ENCODE measurements at regions of chr17 and their contacts with region 1.

Region 1: DNA sequence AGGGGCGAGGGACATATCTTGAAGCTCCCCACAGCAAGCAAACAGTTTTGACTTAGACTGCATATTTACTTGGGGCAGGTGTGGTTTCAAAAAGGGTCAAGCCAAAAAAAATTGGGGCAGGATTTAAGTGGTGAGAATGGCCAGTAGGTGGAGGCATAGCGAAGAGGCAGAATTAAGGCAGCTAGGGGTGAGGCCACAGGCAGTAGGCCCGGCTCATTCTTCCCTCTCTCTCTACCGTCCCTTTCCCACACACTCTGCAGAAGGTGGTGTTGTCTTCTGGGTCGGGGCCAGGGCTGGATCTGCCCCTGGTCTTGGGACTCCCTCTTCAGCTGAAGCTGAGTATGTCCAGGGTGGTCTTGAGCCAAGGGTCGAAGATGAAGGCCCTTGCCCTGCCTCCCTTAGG is 2.6 kb downstream of the SHBG start:
- DNase-seq: peak; percentile 60
- H3K4me3 Mint-ChIP-seq: no peak overlapping the region
- H3K27ac Mint-ChIP-seq: no peak overlapping the region
- H3K4me1 Mint-ChIP-seq: peaks cover 2% of the 10 kb centered on the region
- H3K27me3 Mint-ChIP-seq: no peaks in the 10 kb centered on the region

Region 2: GRCh38 chr17:7502987-7503386 is 129.5 kb before region 1 on chr17:
- CTCF ChIA-PET with region 1: no interaction called
- intact Hi-C with region 1: no loop called
- DNase-seq: peak; percentile 19
- H3K4me3 Mint-ChIP-seq: no peak overlapping the region
- H3K27ac Mint-ChIP-seq: no peak overlapping the region
- H3K4me1 Mint-ChIP-seq: no peaks in the 10 kb centered on the region
- H3K27me3 Mint-ChIP-seq: no peaks in the 10 kb centered on the region

Region 3: GRCh38 chr17:7644775-7645174 is 12.3 kb after region 1 on chr17:
- CTCF ChIA-PET with region 1: interaction called, 13 read pairs
- intact Hi-C with region 1: no loop called
- DNase-seq: no peak
- H3K4me3 Mint-ChIP-seq: no peak overlapping the region
- H3K27ac Mint-ChIP-seq: no peak overlapping the region
- H3K4me1 Mint-ChIP-seq: peaks cover 11% of the 10 kb centered on the region
- H3K27me3 Mint-ChIP-seq: peaks cover under 1% of the 10 kb centered on the region

Region 4: GRCh38 chr17:7650509-7651096 is 18.1 kb after region 1 on chr17 and contains the start of gene ATP1B2:
- CTCF ChIA-PET with region 1: interaction called, 12 read pairs
- intact Hi-C with region 1: no loop called
- DNase-seq: peak; percentile 78
- H3K4me3 Mint-ChIP-seq: peak within 1 kb of the TSS; percentile 62
- H3K27ac Mint-ChIP-seq: no peak within 1 kb of the TSS
- H3K4me1 Mint-ChIP-seq: peaks cover 18% of the 10 kb centered on the region
- H3K27me3 Mint-ChIP-seq: peaks cover 22% of the 10 kb centered on the region
- total RNA-seq, gene ATP1B2: 0.14 to 0.30 TPM

Region 5: DNA sequence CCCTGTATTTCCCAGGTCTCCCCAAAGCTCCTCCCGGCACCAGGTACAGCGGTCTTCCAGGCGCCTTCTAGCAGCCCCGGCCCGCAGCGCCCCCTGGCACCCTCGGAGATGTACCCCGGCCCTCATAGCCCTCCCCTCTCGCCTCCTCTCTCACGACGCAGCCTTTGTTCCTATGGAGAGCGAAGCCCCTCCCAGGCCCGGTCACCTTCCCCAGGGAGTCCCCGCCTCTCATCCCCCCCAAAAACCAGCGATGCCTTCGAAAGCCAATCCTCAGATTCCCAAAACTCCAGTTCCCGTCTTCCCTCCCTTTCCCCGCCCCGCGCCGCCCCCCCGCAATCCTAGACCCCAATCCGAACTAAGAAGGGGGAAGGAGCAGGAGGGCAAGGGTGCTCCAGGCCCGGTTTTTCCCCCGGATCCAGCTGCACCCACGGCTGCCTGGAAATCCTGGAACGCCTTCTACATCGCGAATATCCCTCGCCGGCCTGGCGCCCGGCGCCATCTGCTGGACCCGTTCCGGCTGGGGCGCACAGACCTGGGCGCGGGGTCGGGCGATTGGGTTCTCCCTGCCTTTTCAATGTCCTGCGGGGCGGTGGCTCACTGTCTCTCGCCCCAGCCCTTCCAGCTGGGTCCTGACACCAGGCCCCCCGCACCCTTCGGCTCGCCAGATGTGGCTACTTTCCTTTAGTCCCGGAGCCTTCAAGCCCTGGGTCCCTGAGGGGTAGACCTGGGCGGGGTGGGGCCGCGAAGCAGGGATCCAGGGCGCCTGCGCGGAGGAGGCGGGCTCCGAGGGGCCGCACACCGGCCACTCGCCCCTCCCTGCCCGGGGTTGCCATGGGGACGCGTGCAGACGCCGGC is 84.6 kb after region 1 on chr17 and contains the start of gene DNAH2:
- CTCF ChIA-PET with region 1: interaction called, 4 read pairs
- intact Hi-C with region 1: loop called (anchors 1 kb)
- DNase-seq: peak; percentile 55
- H3K4me3 Mint-ChIP-seq: peak within 1 kb of the TSS; percentile 73
- H3K27ac Mint-ChIP-seq: no peak within 1 kb of the TSS
- H3K4me1 Mint-ChIP-seq: peaks cover 5% of the 10 kb centered on the region
- H3K27me3 Mint-ChIP-seq: peaks cover 61% of the 10 kb centered on the region
- total RNA-seq, gene DNAH2: not detected

Region 6: GRCh38 chr17:8029135-8029534 is 396.6 kb after region 1 on chr17:
- CTCF ChIA-PET with region 1: no interaction called
- intact Hi-C with region 1: no loop called
- DNase-seq: no peak
- H3K4me3 Mint-ChIP-seq: no peak overlapping the region
- H3K27ac Mint-ChIP-seq: no peak overlapping the region
- H3K4me1 Mint-ChIP-seq: no peaks in the 10 kb centered on the region
- H3K27me3 Mint-ChIP-seq: peaks cover 18% of the 10 kb centered on the region